GM13977 (cell line): ENCODE measurements at regions of chr15 and their contacts with region 1.

Region 1: DNA sequence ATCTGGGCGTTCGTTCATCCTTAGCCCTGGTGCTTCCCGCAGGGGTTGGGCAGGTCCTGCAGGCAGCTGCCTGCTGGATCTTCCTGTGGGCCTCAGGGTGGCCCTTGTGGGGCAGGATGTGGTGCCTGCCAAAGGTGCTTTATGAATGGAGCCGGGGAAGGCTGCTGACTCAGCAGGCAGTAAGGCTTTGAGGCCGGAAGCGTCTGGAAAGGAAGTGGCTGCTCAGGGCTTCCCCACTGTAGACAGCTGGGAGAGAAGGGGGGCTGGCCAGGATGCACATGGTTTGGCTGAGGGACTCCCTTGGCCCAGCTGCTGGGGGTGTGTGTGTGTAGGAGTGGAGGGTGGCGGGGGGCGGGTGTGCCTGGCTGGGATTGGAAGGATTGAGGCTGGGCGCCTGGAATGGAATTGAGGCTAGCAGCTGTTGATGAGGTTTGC is 12.9 kb downstream of the CD276 start:
- DNase-seq: peak; percentile 79
- CTCF ChIP-seq: no peak

Region 2: DNA sequence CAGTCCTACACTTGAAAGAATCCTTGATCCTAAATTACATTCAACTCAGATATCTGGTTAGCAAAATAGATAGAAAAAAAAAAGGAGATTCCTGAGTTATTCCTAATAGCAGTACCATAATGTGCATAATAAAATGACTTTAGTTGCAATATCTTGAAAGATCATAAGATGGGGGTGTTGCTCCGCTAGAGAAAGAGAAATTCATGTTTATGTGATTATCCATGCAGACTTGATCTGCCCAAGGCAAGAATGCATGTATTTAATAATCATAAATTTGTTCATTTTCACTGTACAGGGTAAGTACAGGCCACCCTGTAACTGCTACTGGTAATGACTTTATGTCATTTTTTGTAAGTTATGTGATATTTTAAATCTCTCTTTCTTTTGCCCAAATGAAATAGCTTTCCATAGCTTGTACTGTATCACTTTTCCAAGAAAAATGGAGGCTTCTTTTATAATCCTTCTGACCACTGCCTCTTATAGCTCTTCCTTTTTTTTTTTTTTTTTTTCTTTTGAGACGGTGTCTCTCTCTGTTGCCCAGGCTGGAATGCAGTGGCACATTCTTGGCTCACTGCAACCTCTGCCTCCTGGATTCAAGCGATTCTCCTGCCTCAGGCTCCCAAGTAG is 412.8 kb before region 1 on chr15:
- in situ Hi-C with region 1: loop called (anchors 25 kb)
- DNase-seq: no peak
- CTCF ChIP-seq: peak; percentile 12

Region 3: GRCh38 chr15:73560501-73561117 is 136.4 kb before region 1 on chr15:
- in situ Hi-C with region 1: loop called (anchors 25 kb)
- DNase-seq: peak; percentile 27
- CTCF ChIP-seq: peak; percentile 47

Region 4: GRCh38 chr15:73832657-73833056 is 135.6 kb after region 1 on chr15:
- in situ Hi-C with region 1: no loop called
- DNase-seq: no peak
- CTCF ChIP-seq: no peak